Activated CD8-positive, alpha-beta T cell treated with anti-CD3 and anti-CD28 coated beads for 36 hours (primary cell): ENCODE measurements at regions of chr1 and their contacts with region 1.

Region 1: DNA sequence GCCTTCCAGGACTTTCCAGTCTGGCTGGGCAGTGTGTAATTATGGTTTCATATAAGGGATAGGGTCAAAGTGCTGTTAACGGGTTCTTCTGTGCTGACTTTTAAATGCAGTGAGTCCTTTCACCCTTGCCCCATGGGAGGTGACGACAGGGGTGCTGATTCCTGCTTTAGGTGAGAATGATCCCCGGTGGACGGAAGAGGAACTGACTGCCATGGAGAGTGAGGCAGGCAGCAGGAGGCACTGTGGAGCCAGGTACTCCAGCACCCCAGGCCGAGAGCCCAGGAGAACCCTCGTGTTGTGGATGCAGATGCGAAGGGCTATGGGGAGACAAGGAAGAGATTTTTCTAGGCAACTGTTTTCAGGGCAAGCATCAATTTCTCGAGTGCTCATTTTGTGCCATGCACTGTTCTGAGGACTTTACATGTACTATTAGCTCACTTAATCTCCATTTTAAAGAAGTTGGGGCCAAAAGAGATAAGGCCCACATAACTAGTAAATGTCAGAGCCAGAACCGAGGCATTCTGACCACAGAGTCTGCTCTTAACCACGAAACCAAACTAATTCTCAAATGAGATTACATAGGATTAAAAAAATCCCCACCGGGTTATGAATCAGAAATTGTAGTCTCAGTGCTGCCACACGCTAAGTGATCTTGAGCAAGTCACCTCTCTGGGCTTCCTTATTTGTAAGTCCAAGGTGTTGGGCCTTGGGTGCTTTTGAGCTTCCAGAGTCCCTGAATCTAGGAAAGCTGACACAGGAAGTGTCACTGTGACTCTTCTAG is 28.2 kb downstream of the STPG1 start:
- DNase-seq: peak; percentile 61
- ATAC-seq: peak; percentile 57
- H3K4me3 Mint-ChIP-seq: no peak overlapping the region
- H3K27ac Mint-ChIP-seq: peak overlapping the region; percentile 14
- H3K4me1 Mint-ChIP-seq: peaks cover 28% of the 10 kb centered on the region
- H3K27me3 Mint-ChIP-seq: no peaks in the 10 kb centered on the region
- CTCF ChIP-seq: peak; percentile 74

Region 2: GRCh38 chr1:24186993-24187805 is 198.2 kb before region 1 on chr1 and contains the start of gene IFNLR1:
- CTCF ChIA-PET with region 1: interaction called, 46 read pairs
- POLR2A ChIA-PET with region 1: no interaction called
- intact Hi-C with region 1: no loop called
- DNase-seq: peak; percentile 91
- ATAC-seq: peak; percentile 90
- H3K4me3 Mint-ChIP-seq: peak within 1 kb of the TSS; percentile 78
- H3K27ac Mint-ChIP-seq: peak within 1 kb of the TSS; percentile 56
- H3K4me1 Mint-ChIP-seq: peaks cover 65% of the 10 kb centered on the region
- H3K27me3 Mint-ChIP-seq: no peaks in the 10 kb centered on the region
- CTCF ChIP-seq: no peak
- total RNA-seq, gene IFNLR1: 4.8 to 6.4 TPM

Region 3: GRCh38 chr1:24459551-24460266 is 74.4 kb after region 1 on chr1:
- CTCF ChIA-PET with region 1: no interaction called
- POLR2A ChIA-PET with region 1: no interaction called
- intact Hi-C with region 1: no loop called
- DNase-seq: no peak
- ATAC-seq: no peak
- H3K4me3 Mint-ChIP-seq: no peak overlapping the region
- H3K27ac Mint-ChIP-seq: peak overlapping the region; percentile 7
- H3K4me1 Mint-ChIP-seq: peaks cover 19% of the 10 kb centered on the region
- H3K27me3 Mint-ChIP-seq: no peaks in the 10 kb centered on the region
- CTCF ChIP-seq: no peak